Aorta (tissue), 5 donors: ENCODE measurements at regions of chr5 and their contacts with region 1.

Region 1: DNA sequence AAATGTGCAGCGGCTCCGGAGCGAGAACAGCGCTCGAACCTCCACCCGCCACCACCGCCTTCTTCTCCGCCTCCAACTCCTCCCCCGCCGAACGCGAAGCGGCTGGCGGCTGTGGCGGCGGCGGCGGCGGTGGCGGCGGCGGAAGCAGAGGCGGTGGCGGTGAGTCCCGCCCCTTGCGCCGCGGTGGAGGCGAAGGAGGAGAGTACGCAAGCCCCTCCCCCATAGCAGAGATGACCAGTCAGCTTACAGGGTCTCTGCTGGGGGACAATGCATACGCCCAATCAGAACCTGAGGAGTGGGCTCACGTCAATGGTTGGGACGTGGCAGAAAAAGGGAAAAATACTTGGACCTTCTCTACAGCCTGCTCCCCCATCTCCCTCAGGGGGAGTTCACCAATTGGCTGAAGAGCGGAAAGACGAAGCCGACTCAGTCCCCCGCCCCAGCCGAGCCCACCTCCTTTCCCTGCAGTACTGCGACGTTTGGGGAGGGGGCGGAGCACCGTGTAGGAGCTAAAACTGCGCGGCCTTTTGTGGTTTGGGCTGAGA is at the start of gene PJA2:
- DNase-seq: peak; percentile 99 to 100
- ATAC-seq: peak; percentile 97
- H3K4me3 ChIP-seq: peak within 1 kb of the TSS; percentile 92 to 97
- H3K27ac ChIP-seq: peak within 1 kb of the TSS; percentile 99
- H3K4me1 ChIP-seq: peaks cover 0 to 2% of the 10 kb centered on the region in 2 donors
- H3K27me3 ChIP-seq: no peaks in the 10 kb centered on the region
- total RNA-seq, gene PJA2: 128 to 157 TPM

Region 2: GRCh38 chr5:108748401-108749127 is 661.4 kb before region 1 on chr5:
- intact Hi-C with region 1: loop called in 1 of 2 experiments (anchors 2 kb)
- DNase-seq: peak; percentile 99 to 100
- ATAC-seq: peak; percentile 99
- H3K4me3 ChIP-seq: peak overlapping the region; percentile 46 to 90
- H3K27ac ChIP-seq: peak overlapping the region; percentile 85 to 97
- H3K4me1 ChIP-seq: no peaks in the 10 kb centered on the region
- H3K27me3 ChIP-seq: no peaks in the 10 kb centered on the region

Region 3: DNA sequence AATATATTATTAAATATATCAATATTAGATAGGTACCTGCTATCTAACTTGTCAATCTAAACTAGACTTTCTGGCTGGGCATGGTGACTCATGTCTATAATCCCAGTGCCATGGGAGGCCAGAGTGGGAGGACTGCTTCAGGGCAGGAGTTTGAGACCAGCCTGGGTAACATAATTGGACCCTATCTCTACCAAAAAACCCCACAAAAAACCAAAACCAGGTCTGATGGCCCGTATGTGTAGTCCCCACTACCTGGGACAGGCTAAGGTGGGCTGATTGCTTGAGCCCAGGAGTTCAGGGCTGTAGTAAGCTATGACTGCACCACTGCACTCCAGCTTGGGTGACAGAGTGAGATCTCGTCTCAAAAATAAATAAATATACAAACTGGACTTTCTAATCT is 55.2 kb before region 1 on chr5:
- intact Hi-C with region 1: loop called in 1 of 2 experiments (anchors 10 kb)
- DNase-seq: peak in 1 of 2 donors; percentile 45
- ATAC-seq: peak; percentile 59
- H3K4me3 ChIP-seq: no peak overlapping the region
- H3K27ac ChIP-seq: no peak overlapping the region
- H3K4me1 ChIP-seq: no peaks in the 10 kb centered on the region
- H3K27me3 ChIP-seq: no peaks in the 10 kb centered on the region

Region 4: DNA sequence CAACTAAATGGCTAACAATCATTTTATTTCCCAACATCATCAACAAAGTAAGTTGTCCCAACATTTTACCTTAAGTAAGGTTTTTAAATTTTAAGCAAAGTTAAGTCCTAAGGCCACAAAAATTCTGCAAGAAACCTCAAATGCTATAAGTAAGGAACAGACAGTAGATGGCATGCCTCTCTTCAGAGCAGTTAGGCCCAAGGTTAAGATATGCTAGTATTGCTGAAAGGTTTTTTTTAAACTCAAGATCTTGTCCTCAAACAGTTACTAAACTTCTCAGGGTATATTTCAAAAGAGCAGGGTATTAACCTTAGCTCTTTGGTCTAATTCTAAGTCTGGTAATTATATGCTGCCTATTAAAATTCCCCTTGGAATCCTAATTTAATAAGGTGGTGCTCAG is 35.3 kb before region 1 on chr5:
- intact Hi-C with region 1: loop called in 1 of 2 experiments (anchors 5 kb)
- DNase-seq: no peak
- ATAC-seq: no peak
- H3K4me3 ChIP-seq: no peak overlapping the region
- H3K27ac ChIP-seq: no peak overlapping the region
- H3K4me1 ChIP-seq: peaks cover 1 to 11% of the 10 kb centered on the region in 2 donors
- H3K27me3 ChIP-seq: no peaks in the 10 kb centered on the region

Region 5: DNA sequence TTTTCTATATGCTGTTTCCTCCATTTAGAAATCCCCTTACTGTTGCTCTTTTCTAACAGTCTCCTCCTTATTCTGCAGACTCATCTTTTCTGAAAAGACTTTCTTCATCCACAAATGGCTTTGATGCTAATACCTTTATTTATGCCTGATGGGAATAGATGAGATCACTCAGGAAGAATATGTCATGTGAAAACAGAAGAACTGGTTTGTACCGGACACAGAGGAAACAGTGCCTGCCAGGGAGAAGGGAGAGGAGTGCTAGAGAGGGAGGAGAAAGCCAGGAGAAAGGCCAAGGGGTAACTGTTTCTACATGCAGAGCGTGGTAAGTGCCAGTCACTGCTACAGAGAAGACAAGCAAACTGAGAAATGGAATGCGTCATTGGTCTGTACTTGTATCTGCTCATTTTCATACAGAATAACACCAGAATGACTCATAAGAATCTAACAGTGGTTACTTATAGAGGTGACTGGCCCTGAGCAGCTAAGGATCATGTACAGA is 45.7 kb after region 1 on chr5:
- intact Hi-C with region 1: loop called in 1 of 2 experiments (anchors 2 kb)
- DNase-seq: peak in 1 of 2 donors; percentile 69
- ATAC-seq: peak; percentile 92
- H3K4me3 ChIP-seq: peak overlapping the region in 1 of 2 donors; percentile 15
- H3K27ac ChIP-seq: peak overlapping the region; percentile 60 to 89
- H3K4me1 ChIP-seq: peaks cover 4% of the 10 kb centered on the region in 2 donors
- H3K27me3 ChIP-seq: no peaks in the 10 kb centered on the region